ENCODE measurements at regions of chrX and their contacts with region 1.

Region 1: GRCh38 chrX:47193475-47194193 is at the start of gene UBA1:
- DNase-seq: peak; percentile 98 to 99
- H3K4me3 ChIP-seq: peak within 1 kb of the TSS; percentile 51 to 73 (median 68)
- H3K27ac ChIP-seq: peak within 1 kb of the TSS; percentile 95 to 98 (median 96)
- H3K4me1 ChIP-seq: peaks cover 20 to 72% (median 65%) of the 10 kb centered on the region in 4 donors
- H3K27me3 ChIP-seq: peaks cover 0 to 12% (median 0%) of the 10 kb centered on the region in 3 donors
- CTCF ChIP-seq: peak in 5 of 7 experiments; percentile 58 to 99 (median 70)
- EP300 ChIP-seq: no peak
- POLR2A ChIP-seq: peak in 1 of 4 donors; percentile 49
- total RNA-seq, gene UBA1: 66.8 to 278 (median 115) TPM

Region 2: GRCh38 chrX:47384502-47384901 is 190.9 kb after region 1 on chrX:
- intact Hi-C with region 1: loop called (anchors 10 kb)
- DNase-seq: peak; percentile 76 to 89
- H3K4me3 ChIP-seq: no peak overlapping the region
- H3K27ac ChIP-seq: no peak overlapping the region
- H3K4me1 ChIP-seq: no peaks in the 10 kb centered on the region
- H3K27me3 ChIP-seq: no peaks in the 10 kb centered on the region
- CTCF ChIP-seq: peak in 5 of 7 experiments; percentile 20 to 83 (median 65)
- EP300 ChIP-seq: no peak
- POLR2A ChIP-seq: no peak

Region 3: GRCh38 chrX:47523297-47523696 is 329.7 kb after region 1 on chrX:
- intact Hi-C with region 1: loop called (anchors 10 kb)
- DNase-seq: peak; percentile 86 to 94
- H3K4me3 ChIP-seq: peak overlapping the region; percentile 50 to 60 (median 56)
- H3K27ac ChIP-seq: peak overlapping the region in 2 of 5 donors; percentile 46 to 49
- H3K4me1 ChIP-seq: peaks cover 0 to 5% (median 2%) of the 10 kb centered on the region in 4 donors
- H3K27me3 ChIP-seq: no peaks in the 10 kb centered on the region
- CTCF ChIP-seq: peak in 5 of 7 experiments; percentile 41 to 78 (median 65)
- EP300 ChIP-seq: no peak
- POLR2A ChIP-seq: no peak

Region 4: DNA sequence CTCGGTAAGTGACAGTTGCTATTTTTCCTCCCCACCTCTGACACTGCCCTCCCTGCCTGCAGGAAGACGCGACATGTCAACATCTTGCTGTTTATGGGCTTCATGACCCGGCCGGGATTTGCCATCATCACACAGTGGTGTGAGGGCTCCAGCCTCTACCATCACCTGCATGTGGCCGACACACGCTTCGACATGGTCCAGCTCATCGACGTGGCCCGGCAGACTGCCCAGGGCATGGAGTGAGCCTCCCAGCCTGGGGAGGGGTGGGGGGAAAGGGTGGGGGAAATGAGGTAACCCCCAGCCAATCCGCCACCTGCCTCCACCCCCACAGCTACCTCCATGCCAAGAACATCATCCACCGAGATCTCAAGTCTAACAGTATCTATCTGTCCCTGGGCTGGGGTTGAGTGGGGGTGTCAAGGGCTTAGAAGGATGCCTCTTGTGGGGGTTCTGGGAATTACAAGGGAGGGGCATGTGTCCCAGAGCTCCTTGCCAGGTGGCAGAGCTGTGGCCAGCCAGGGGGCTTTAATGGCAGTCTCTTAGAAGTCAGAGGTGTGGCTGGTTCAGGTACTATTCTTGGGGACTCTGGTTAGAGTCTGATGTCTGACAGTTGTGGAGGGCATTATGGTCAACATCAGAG is 375.1 kb after region 1 on chrX:
- intact Hi-C with region 1: no loop called
- DNase-seq: no peak
- H3K4me3 ChIP-seq: no peak overlapping the region
- H3K27ac ChIP-seq: no peak overlapping the region
- H3K4me1 ChIP-seq: peaks cover 0 to 16% (median 4%) of the 10 kb centered on the region in 4 donors
- H3K27me3 ChIP-seq: no peaks in the 10 kb centered on the region
- CTCF ChIP-seq: peak in 3 of 7 experiments; percentile 12 to 38 (median 14)
- EP300 ChIP-seq: no peak
- POLR2A ChIP-seq: no peak